Activated CD8-positive, alpha-beta T cell treated with anti-CD3 and anti-CD28 coated beads for 36 hours (primary cell): ENCODE measurements at regions of chr2 and their contacts with region 1.

Region 1: DNA sequence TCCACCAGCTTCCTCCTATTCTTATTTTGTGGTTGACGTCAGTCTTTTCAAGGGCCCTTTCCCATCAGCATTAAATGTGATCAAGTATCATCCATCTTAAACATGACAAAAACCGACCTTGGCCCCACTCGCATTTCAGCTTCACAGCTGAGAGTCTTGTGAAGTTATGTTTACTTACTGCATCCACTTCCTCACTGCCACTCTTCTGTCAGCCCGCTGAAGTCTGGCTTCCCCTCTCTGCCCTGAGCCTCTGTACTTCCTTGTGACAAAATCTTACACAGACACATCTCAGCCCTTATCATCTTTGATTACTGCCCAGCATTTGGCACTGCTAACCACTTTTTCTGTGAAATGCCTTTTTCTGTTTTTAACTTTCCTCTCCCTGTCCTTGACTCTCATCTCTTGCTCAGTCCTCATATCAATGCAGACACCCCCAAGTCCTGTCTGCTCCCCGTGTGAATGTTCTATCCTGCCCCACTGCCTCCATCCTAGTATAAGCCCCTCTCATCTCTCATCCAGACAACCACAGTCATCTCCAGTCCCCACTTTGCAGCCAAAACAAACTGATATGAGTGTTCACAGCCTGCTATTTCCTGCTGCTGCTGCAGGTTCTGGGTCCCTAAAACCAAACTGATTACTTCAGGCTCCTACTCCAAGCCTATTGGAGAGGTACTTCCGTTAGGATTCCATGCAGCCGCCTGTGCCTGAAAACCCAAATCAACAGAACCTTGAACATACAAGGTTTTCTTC is 31.4 kb downstream of the FOSL2 start:
- DNase-seq: peak; percentile 71
- ATAC-seq: peak; percentile 62
- H3K4me3 Mint-ChIP-seq: peak overlapping the region; percentile 49
- H3K27ac Mint-ChIP-seq: peak overlapping the region; percentile 94
- H3K4me1 Mint-ChIP-seq: peaks cover 64% of the 10 kb centered on the region
- H3K27me3 Mint-ChIP-seq: no peaks in the 10 kb centered on the region
- CTCF ChIP-seq: no peak

Region 2: GRCh38 chr2:28413142-28413898 is 10.7 kb before region 1 on chr2:
- CTCF ChIA-PET with region 1: interaction called, 6 read pairs
- POLR2A ChIA-PET with region 1: interaction called, 19 read pairs
- intact Hi-C with region 1: no loop called
- DNase-seq: no peak
- ATAC-seq: no peak
- H3K4me3 Mint-ChIP-seq: no peak overlapping the region
- H3K27ac Mint-ChIP-seq: no peak overlapping the region
- H3K4me1 Mint-ChIP-seq: peaks cover 45% of the 10 kb centered on the region
- H3K27me3 Mint-ChIP-seq: no peaks in the 10 kb centered on the region
- CTCF ChIP-seq: no peak

Region 3: GRCh38 chr2:28435814-28436351 is 11.9 kb after region 1 on chr2:
- CTCF ChIA-PET with region 1: no interaction called
- POLR2A ChIA-PET with region 1: interaction called, 16 read pairs
- intact Hi-C with region 1: no loop called
- DNase-seq: no peak
- ATAC-seq: no peak
- H3K4me3 Mint-ChIP-seq: no peak overlapping the region
- H3K27ac Mint-ChIP-seq: no peak overlapping the region
- H3K4me1 Mint-ChIP-seq: peaks cover 32% of the 10 kb centered on the region
- H3K27me3 Mint-ChIP-seq: no peaks in the 10 kb centered on the region
- CTCF ChIP-seq: no peak

Region 4: DNA sequence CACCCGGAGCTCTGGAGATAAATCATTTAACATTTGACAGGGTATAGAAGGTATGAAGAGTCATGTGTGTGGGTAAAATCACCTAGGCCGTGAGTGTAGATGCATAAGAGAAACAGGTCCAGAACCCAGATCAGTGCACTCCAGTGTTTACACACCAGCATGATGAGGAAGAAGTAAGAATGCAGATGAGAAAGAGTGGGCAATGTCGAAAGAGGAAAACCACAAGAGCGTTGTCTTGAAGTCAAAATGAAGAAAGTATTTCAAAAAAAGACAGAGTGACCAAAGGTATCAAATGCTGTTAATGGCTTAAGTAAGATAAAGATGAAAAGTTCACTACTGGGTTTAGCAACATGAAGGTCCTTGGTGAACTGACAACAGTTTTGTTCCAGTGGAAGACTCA is 39.9 kb after region 1 on chr2:
- CTCF ChIA-PET with region 1: no interaction called
- POLR2A ChIA-PET with region 1: no interaction called
- intact Hi-C with region 1: no loop called
- DNase-seq: no peak
- ATAC-seq: no peak
- H3K4me3 Mint-ChIP-seq: no peak overlapping the region
- H3K27ac Mint-ChIP-seq: no peak overlapping the region
- H3K4me1 Mint-ChIP-seq: peaks cover 24% of the 10 kb centered on the region
- H3K27me3 Mint-ChIP-seq: peaks cover 14% of the 10 kb centered on the region
- CTCF ChIP-seq: no peak

Region 5: GRCh38 chr2:28855193-28855592 is 431.2 kb after region 1 on chr2:
- CTCF ChIA-PET with region 1: no interaction called
- POLR2A ChIA-PET with region 1: no interaction called
- intact Hi-C with region 1: no loop called
- DNase-seq: no peak
- ATAC-seq: no peak
- H3K4me3 Mint-ChIP-seq: no peak overlapping the region
- H3K27ac Mint-ChIP-seq: no peak overlapping the region
- H3K4me1 Mint-ChIP-seq: no peaks in the 10 kb centered on the region
- H3K27me3 Mint-ChIP-seq: no peaks in the 10 kb centered on the region
- CTCF ChIP-seq: no peak